Activated B cell treated with CpG ODN at 0.5 μM for 24 hours (primary cell): ENCODE measurements at regions of chr11 and their contacts with region 1.

Region 1: GRCh38 chr11:57712256-57713150 is at the start of gene TMX2:
- DNase-seq: peak; percentile 75
- ATAC-seq: peak; percentile 87
- H3K4me3 Mint-ChIP-seq: peak within 1 kb of the TSS; percentile 98
- H3K27ac Mint-ChIP-seq: peak within 1 kb of the TSS; percentile 96
- H3K4me1 Mint-ChIP-seq: peaks cover 47% of the 10 kb centered on the region
- H3K27me3 Mint-ChIP-seq: no peaks in the 10 kb centered on the region
- CTCF ChIP-seq: no peak
- total RNA-seq, gene TMX2: 53.2 and 53.3 TPM in 2 replicates

Region 2: GRCh38 chr11:57335343-57336110 is 377.0 kb before region 1 on chr11 and contains the start of gene SSRP1:
- CTCF ChIA-PET with region 1: no interaction called
- POLR2A ChIA-PET with region 1: no interaction called
- intact Hi-C with region 1: loop called (anchors 2 kb)
- DNase-seq: peak; percentile 77
- ATAC-seq: peak; percentile 97
- H3K4me3 Mint-ChIP-seq: peak within 1 kb of the TSS; percentile 94
- H3K27ac Mint-ChIP-seq: peak within 1 kb of the TSS; percentile 98
- H3K4me1 Mint-ChIP-seq: peaks cover 27% of the 10 kb centered on the region
- H3K27me3 Mint-ChIP-seq: peaks cover 2% of the 10 kb centered on the region
- CTCF ChIP-seq: no peak
- total RNA-seq, gene SSRP1: 120 and 127 TPM in 2 replicates

Region 3: GRCh38 chr11:57657194-57658022 is 55.1 kb before region 1 on chr11 and contains the start of gene CLP1:
- CTCF ChIA-PET with region 1: no interaction called
- POLR2A ChIA-PET with region 1: interaction called, 5 read pairs
- intact Hi-C with region 1: loop called (anchors 1 kb)
- DNase-seq: peak; percentile 96
- ATAC-seq: peak; percentile 97
- H3K4me3 Mint-ChIP-seq: peak within 1 kb of the TSS; percentile 99
- H3K27ac Mint-ChIP-seq: peak within 1 kb of the TSS; percentile 94
- H3K4me1 Mint-ChIP-seq: peaks cover 23% of the 10 kb centered on the region
- H3K27me3 Mint-ChIP-seq: no peaks in the 10 kb centered on the region
- CTCF ChIP-seq: no peak
- total RNA-seq, gene CLP1: 20.4 and 20.9 TPM in 2 replicates

Region 4: GRCh38 chr11:57735619-57736298 is 23.3 kb after region 1 on chr11:
- CTCF ChIA-PET with region 1: interaction called, 5 read pairs
- POLR2A ChIA-PET with region 1: interaction called, 21 read pairs
- intact Hi-C with region 1: no loop called
- DNase-seq: no peak
- ATAC-seq: no peak
- H3K4me3 Mint-ChIP-seq: no peak overlapping the region
- H3K27ac Mint-ChIP-seq: no peak overlapping the region
- H3K4me1 Mint-ChIP-seq: peaks cover 6% of the 10 kb centered on the region
- H3K27me3 Mint-ChIP-seq: no peaks in the 10 kb centered on the region
- CTCF ChIP-seq: no peak

Region 5: DNA sequence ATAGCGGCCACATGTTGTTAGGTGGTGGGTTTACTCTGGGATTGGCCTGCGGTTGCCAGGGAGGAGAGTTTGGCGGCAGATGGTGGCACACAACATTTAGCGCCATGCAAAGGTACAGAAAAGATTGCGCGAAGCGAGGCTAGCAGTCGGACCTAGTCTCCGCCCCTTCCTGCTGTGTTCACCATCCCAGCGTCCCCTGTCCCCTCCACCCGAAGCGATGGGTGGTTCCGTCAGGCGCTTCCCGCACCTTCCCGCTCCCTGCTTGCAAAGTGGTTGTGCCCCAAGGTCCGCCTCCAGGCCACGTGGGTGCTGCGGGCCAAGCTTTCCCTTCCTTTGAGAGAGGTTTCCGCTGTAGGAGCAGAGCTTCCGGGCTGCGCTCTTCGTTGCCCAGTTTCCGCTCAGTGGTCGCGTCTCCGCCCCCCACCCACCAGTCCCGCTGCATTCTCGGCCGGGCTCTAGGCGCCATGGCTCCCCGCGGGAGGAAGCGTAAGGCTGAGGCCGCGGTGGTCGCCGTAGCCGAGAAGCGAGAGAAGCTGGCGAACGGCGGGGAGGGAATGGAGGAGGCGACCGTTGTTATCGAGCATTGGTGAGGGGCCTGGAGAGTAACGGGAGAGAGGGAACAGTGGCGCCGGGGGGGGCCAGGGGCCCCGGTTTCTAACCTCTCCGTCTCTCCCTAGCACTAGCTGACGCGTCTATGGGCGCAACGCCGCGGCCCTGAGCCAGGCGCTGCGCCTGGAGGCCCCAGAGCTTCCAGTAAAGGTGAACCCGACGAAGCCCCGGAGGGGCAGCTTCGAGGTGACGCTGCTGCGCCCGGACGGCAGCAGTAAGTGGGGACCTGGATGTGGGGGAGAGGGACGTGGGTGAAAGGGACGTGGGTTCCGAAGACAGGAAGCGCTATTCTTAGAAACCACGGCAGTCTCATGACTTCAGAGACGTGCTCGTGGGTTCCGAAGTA is 28.9 kb after region 1 on chr11 and contains the start of gene SELENOH:
- CTCF ChIA-PET with region 1: interaction called, 5 read pairs
- POLR2A ChIA-PET with region 1: interaction called, 21 read pairs
- intact Hi-C with region 1: loop called (anchors 1 kb)
- DNase-seq: peak; percentile 84
- ATAC-seq: peak; percentile 90
- H3K4me3 Mint-ChIP-seq: peak within 1 kb of the TSS; percentile 96
- H3K27ac Mint-ChIP-seq: peak within 1 kb of the TSS; percentile 98
- H3K4me1 Mint-ChIP-seq: peaks cover 30% of the 10 kb centered on the region
- H3K27me3 Mint-ChIP-seq: no peaks in the 10 kb centered on the region
- CTCF ChIP-seq: no peak
- total RNA-seq, gene SELENOH: 210 and 224 TPM in 2 replicates

Region 6: GRCh38 chr11:57785072-57785471 is 72.6 kb after region 1 on chr11:
- CTCF ChIA-PET with region 1: no interaction called
- POLR2A ChIA-PET with region 1: interaction called, 13 read pairs
- intact Hi-C with region 1: no loop called
- DNase-seq: no peak
- ATAC-seq: peak; percentile 87
- H3K4me3 Mint-ChIP-seq: peak overlapping the region; percentile 75
- H3K27ac Mint-ChIP-seq: peak overlapping the region; percentile 92
- H3K4me1 Mint-ChIP-seq: peaks cover 67% of the 10 kb centered on the region
- H3K27me3 Mint-ChIP-seq: no peaks in the 10 kb centered on the region
- CTCF ChIP-seq: no peak

Region 7: DNA sequence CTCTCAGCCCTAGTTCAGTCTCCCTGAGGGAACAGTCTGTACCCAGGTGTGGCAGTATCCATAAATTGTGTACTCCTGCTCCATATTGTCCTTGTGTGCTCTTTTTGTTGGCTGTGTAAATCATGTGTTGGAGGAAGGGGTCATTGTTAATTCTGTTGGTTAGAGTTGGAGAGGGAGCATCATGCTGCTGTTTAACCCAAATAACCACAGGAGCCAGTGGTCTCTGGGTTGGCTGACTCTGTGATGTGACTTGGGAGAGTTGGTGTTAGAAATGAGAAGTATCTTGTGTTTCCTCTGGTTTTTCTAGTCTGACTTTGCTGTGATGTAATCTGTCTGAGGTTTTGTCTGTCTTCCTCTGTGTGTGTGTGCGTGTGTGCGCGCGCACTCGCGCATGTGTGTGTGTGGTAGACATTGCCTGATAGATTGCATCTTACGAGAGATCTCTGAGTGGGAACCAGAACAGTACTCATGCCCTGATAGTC is 79.6 kb after region 1 on chr11:
- CTCF ChIA-PET with region 1: interaction called, 3 read pairs
- POLR2A ChIA-PET with region 1: interaction called, 4 read pairs
- intact Hi-C with region 1: loop called (anchors 1 kb)
- DNase-seq: peak; percentile 71
- ATAC-seq: peak; percentile 89
- H3K4me3 Mint-ChIP-seq: peak overlapping the region; percentile 75
- H3K27ac Mint-ChIP-seq: peak overlapping the region; percentile 90
- H3K4me1 Mint-ChIP-seq: peaks cover 73% of the 10 kb centered on the region
- H3K27me3 Mint-ChIP-seq: no peaks in the 10 kb centered on the region
- CTCF ChIP-seq: no peak

Region 8: DNA sequence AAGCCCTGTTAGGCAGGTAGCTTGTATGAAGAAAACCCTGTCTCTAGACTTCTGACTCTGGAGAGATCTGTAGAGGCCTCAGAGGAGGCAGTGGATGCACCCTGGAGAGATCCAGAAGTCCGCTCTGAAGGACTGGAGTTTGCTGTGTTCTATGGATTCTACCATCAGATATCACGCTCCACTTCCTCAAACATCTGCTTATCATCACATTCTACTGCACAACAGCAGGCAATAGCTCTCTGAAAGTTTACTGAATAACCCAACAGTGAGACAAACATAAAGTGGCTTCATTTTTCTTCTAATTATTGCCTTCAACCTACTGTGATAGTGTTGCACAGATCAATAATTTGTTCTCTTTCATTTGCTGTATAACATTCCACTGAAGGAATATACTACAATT is 252.2 kb after region 1 on chr11:
- CTCF ChIA-PET with region 1: no interaction called
- POLR2A ChIA-PET with region 1: no interaction called
- intact Hi-C with region 1: no loop called
- DNase-seq: no peak
- ATAC-seq: no peak
- H3K4me3 Mint-ChIP-seq: no peak overlapping the region
- H3K27ac Mint-ChIP-seq: no peak overlapping the region
- H3K4me1 Mint-ChIP-seq: no peaks in the 10 kb centered on the region
- H3K27me3 Mint-ChIP-seq: peaks cover 6% of the 10 kb centered on the region
- CTCF ChIP-seq: no peak